MCF 10A (cell line): ENCODE measurements at regions of chr16 and their contacts with region 1.

Region 1: DNA sequence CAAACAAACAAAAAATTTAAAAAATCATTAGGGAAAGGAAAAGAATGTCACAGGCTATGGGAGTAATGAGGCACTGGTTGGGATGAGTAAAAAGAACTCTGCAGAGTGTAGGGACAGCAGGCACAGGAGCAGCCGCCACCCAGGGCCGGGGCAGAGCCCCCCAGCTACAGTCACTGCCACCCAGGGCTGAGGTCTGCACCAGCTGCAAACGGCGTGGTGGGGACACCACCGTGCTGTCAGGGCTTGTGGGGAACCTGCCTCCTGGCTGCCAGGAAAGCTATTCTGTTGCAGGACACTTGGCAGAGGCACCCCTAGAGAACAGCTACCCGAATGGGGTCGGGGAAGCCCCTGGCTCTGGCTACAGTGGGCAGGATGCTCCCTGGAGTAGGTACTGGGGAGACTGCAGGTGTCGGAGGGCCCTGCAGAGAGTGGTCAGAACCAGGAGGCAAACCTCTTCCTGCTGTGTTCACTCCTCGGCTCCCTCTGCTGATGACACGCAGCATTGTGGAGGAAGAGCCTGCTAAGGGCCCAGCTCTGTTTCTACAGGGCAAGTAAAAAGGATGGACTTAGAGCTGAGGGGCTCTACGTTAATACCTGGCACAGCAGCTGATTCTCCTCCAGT is 32.3 kb upstream of the CAPN15 start:
- DNase-seq: peak; percentile 51
- H3K4me3 Mint-ChIP-seq: no peak overlapping the region
- H3K27ac Mint-ChIP-seq: no peak overlapping the region
- H3K4me1 Mint-ChIP-seq: no peaks in the 10 kb centered on the region
- H3K27me3 Mint-ChIP-seq: no peaks in the 10 kb centered on the region
- CTCF ChIP-seq: peak; percentile 39

Region 2: GRCh38 chr16:386641-387156 is 108.5 kb before region 1 on chr16:
- CTCF ChIA-PET with region 1: interaction called, 3 read pairs
- POLR2A ChIA-PET with region 1: interaction called, 3 read pairs
- intact Hi-C with region 1: loop called (anchors 2 kb)
- DNase-seq: no peak
- H3K4me3 Mint-ChIP-seq: no peak overlapping the region
- H3K27ac Mint-ChIP-seq: no peak overlapping the region
- H3K4me1 Mint-ChIP-seq: peaks cover 6% of the 10 kb centered on the region
- H3K27me3 Mint-ChIP-seq: no peaks in the 10 kb centered on the region
- CTCF ChIP-seq: peak; percentile 17

Region 3: DNA sequence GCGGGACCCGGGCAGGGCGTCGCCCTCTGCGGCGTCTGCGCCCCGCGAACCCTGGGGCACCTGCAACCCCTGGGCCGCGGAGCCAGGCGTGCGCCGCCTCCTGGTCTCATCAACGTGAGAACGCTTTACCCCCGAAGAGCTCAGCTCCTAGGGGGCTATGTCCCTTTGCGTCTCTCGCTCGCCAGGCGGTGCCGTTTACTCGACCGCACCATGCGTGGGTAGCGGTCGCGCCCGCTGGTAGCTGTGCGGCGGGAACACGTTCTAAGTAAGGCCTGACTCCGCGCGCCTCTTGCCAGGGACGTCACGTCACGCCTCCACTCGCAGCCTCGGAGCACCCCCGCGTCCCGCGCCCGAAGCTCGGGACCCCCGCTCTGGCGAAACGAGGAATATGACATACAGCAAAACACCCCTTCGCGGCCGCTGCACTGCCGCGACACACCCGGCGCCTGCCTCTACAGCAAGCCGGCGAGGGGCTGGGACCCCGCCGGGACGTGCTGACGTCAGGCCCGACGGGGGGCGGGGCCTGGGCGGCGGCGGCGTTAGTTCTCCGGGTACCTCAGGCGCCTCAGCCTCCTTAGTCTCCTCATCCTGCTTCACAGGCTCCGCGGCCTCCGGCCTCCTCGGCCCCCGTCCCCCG is 70.0 kb before region 1 on chr16 and contains the start of gene RAB11FIP3:
- CTCF ChIA-PET with region 1: no interaction called
- POLR2A ChIA-PET with region 1: no interaction called
- intact Hi-C with region 1: loop called (anchors 10 kb)
- DNase-seq: peak; percentile 74
- H3K4me3 Mint-ChIP-seq: peak within 1 kb of the TSS; percentile 73
- H3K27ac Mint-ChIP-seq: peak within 1 kb of the TSS; percentile 71
- H3K4me1 Mint-ChIP-seq: peaks cover 35% of the 10 kb centered on the region
- H3K27me3 Mint-ChIP-seq: no peaks in the 10 kb centered on the region
- CTCF ChIP-seq: no peak
- total RNA-seq, gene RAB11FIP3: 37.5 and 40.6 TPM in 2 replicates

Region 4: GRCh38 chr16:512802-513201 is 17.6 kb after region 1 on chr16:
- CTCF ChIA-PET with region 1: interaction called, 4 read pairs
- POLR2A ChIA-PET with region 1: no interaction called
- intact Hi-C with region 1: loop called (anchors 1 kb)
- DNase-seq: no peak
- H3K4me3 Mint-ChIP-seq: no peak overlapping the region
- H3K27ac Mint-ChIP-seq: no peak overlapping the region
- H3K4me1 Mint-ChIP-seq: no peaks in the 10 kb centered on the region
- H3K27me3 Mint-ChIP-seq: no peaks in the 10 kb centered on the region
- CTCF ChIP-seq: no peak

Region 5: DNA sequence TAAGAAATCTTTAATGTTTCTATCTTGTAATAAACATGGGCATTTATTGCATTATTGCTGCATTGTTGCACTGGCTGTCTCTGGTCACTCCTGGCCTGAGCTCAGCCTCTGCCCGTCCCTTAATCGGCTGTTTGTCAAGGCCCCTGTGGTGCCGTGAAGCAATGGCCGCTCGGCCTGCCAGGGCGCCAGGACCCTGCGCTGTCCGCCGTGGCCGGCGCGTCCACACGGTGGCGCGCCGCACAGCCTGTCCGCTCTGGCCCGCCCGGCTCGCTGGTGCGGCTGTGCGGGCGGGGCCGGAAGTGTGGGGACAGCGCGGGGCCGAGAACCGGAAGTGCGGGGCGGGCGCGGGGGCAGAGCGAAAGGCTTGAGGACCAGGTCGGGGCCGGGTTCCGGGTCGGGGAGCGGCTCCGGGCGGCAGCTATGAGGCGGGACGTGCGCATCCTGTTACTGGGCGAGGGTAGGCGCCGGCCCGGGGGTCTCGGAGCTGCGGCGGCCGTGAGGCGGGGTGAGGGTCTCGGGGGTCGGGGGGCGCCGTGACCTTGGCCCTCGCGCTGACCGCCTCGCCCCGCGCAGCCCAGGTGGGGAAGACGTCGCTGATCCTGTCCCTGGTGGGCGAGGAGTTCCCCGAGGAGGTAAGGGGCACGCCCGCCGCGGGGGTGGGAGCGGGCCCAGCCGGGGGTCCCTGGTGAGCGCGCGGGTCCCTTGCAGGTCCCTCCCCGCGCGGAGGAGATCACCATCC is 172.7 kb after region 1 on chr16 and contains the start of gene RHOT2:
- CTCF ChIA-PET with region 1: no interaction called
- POLR2A ChIA-PET with region 1: no interaction called
- intact Hi-C with region 1: no loop called
- DNase-seq: peak; percentile 87
- H3K4me3 Mint-ChIP-seq: peak within 1 kb of the TSS; percentile 75
- H3K27ac Mint-ChIP-seq: peak within 1 kb of the TSS; percentile 85
- H3K4me1 Mint-ChIP-seq: no peaks in the 10 kb centered on the region
- H3K27me3 Mint-ChIP-seq: no peaks in the 10 kb centered on the region
- CTCF ChIP-seq: peak; percentile 67
- total RNA-seq, gene RHOT2: 110 and 118 TPM in 2 replicates